ENCODE measurements at regions of chr4 and their contacts with region 1.

Region 1: GRCh38 chr4:7052923-7053715 is 9.9 kb downstream of the TADA2B start:
- DNase-seq: no peak
- H3K4me3 ChIP-seq: no peak overlapping the region
- H3K27me3 ChIP-seq: no peaks in the 10 kb centered on the region
- CTCF ChIP-seq: no peak

Region 2: GRCh38 chr4:6986781-6987587 is 66.1 kb before region 1 on chr4:
- CTCF ChIA-PET with region 1: no interaction called
- POLR2A ChIA-PET with region 1: interaction called, 19 read pairs
- DNase-seq: no peak
- H3K4me3 ChIP-seq: peak overlapping the region; percentile 91
- H3K27me3 ChIP-seq: no peaks in the 10 kb centered on the region
- CTCF ChIP-seq: peak; percentile 15; the same call in 1 of the 2 replicates

Region 3: GRCh38 chr4:7021930-7022658 is 31.0 kb before region 1 on chr4:
- CTCF ChIA-PET with region 1: no interaction called
- POLR2A ChIA-PET with region 1: no interaction called
- DNase-seq: peak; percentile 94
- H3K4me3 ChIP-seq: no peak overlapping the region
- H3K27me3 ChIP-seq: no peaks in the 10 kb centered on the region
- CTCF ChIP-seq: 0 out of 2 replicates have a peak, but pooled peaks have one; percentile 4

Region 4: GRCh38 chr4:7042697-7043464 is 10.2 kb before region 1 on chr4 and contains the start of gene TADA2B:
- CTCF ChIA-PET with region 1: interaction called, 14 read pairs
- POLR2A ChIA-PET with region 1: interaction called, 3 read pairs
- DNase-seq: peak; percentile 79
- H3K4me3 ChIP-seq: peak within 1 kb of the TSS; percentile 96
- H3K27me3 ChIP-seq: no peaks in the 10 kb centered on the region
- CTCF ChIP-seq: no peak
- polyA plus RNA-seq, gene TADA2B: 6.1 and 7.3 TPM in 2 replicates